Endothelial cell of umbilical vein (primary cell): ENCODE measurements at regions of chr10 and their contacts with region 1.

Region 1: GRCh38 chr10:122181055-122181732 is 89.9 kb upstream of the BTBD16 start:
- DNase-seq: peak; percentile 21
- H3K4me3 ChIP-seq: no peak overlapping the region
- H3K27ac ChIP-seq: no peak overlapping the region
- H3K4me1 ChIP-seq: peaks cover 28% of the 10 kb centered on the region
- H3K27me3 ChIP-seq: no peaks in the 10 kb centered on the region
- CTCF ChIP-seq: no peak
- POLR2A ChIP-seq: no peak

Region 2: GRCh38 chr10:122163174-122164022 is 17.8 kb before region 1 on chr10:
- CTCF ChIA-PET with region 1: interaction called, 21 read pairs
- POLR2A ChIA-PET with region 1: no interaction called
- dilution Hi-C with region 1: no loop called
- intact Hi-C with region 1: no loop called
- DNase-seq: peak; percentile 49
- H3K4me3 ChIP-seq: peak overlapping the region; percentile 22 to 57 (median 43)
- H3K27ac ChIP-seq: no peak overlapping the region
- H3K4me1 ChIP-seq: peaks cover 8% of the 10 kb centered on the region
- H3K27me3 ChIP-seq: no peaks in the 10 kb centered on the region
- CTCF ChIP-seq: no peak
- POLR2A ChIP-seq: no peak

Region 3: DNA sequence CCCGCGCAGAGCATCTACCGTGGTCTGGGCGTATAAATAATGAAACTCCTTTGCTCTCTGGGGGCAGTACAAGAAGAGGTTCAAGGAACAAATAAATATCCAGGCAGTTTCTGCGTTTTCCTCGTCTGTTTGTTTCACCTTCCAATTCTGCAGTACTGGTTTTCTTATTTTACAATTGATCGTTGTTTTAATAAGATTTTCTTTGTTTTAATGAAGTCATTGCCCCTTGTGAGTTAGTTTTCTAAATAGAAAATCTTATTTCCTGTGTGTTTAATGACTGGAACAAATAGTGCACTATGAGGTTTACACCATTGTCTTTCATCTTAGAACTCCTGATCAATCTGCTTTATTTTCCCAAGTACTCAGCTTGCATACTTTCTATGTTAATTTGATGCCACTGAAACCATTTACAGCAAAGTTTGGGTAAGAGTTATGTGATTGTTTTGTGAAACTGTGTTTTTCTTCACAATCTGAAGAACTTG is 194.5 kb after region 1 on chr10:
- CTCF ChIA-PET with region 1: no interaction called
- POLR2A ChIA-PET with region 1: no interaction called
- dilution Hi-C with region 1: no loop called
- intact Hi-C with region 1: no loop called
- DNase-seq: peak; percentile 57
- H3K4me3 ChIP-seq: peak overlapping the region; percentile 61 to 85 (median 77)
- H3K27ac ChIP-seq: peak overlapping the region; percentile 84
- H3K4me1 ChIP-seq: peaks cover 15% of the 10 kb centered on the region
- H3K27me3 ChIP-seq: no peaks in the 10 kb centered on the region
- CTCF ChIP-seq: no peak
- POLR2A ChIP-seq: no peak